ENCODE measurements at regions of chr17 and their contacts with region 1.

Region 1: DNA sequence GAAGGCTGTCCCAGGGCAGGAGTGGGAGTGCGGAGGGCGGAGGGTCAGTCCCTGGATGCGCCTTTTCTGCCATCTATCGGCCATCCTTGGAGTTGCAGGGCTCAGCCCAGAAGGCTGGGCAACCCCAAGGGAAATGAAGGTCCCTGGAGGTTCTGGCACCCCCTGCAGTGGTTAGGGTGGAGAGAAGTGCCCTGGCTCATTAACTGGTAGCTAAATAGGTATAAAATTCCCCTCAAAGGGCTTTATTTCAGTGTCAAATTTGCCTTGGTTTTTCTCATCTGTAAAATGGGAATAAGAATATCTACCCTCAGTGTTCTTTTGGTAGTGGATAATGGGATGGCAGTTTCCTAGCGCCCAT is 22.4 kb downstream of the C17orf75 start:
- DNase-seq: peak; percentile 83
- H3K4me3 ChIP-seq: no peak overlapping the region
- H3K27ac ChIP-seq: no peak overlapping the region
- H3K4me1 ChIP-seq: peaks cover 0 to 9% (median 2%) of the 10 kb centered on the region in 4 donors
- H3K27me3 ChIP-seq: no peaks in the 10 kb centered on the region
- CTCF ChIP-seq: peak; percentile 90 to 96 (median 93)
- EP300 ChIP-seq: no peak
- POLR2A ChIP-seq: no peak

Region 2: GRCh38 chr17:32253117-32253611 is 66.4 kb before region 1 on chr17:
- in situ Hi-C with region 1: loop called in 2 of 4 experiments (anchors 5 kb)
- intact Hi-C with region 1: loop called (anchors 2 kb)
- DNase-seq: peak; percentile 81
- H3K4me3 ChIP-seq: no peak overlapping the region
- H3K27ac ChIP-seq: no peak overlapping the region
- H3K4me1 ChIP-seq: peaks cover 0 to 7% (median 5%) of the 10 kb centered on the region in 4 donors
- H3K27me3 ChIP-seq: no peaks in the 10 kb centered on the region
- CTCF ChIP-seq: peak; percentile 86 to 97 (median 95)
- EP300 ChIP-seq: no peak
- POLR2A ChIP-seq: no peak

Region 3: DNA sequence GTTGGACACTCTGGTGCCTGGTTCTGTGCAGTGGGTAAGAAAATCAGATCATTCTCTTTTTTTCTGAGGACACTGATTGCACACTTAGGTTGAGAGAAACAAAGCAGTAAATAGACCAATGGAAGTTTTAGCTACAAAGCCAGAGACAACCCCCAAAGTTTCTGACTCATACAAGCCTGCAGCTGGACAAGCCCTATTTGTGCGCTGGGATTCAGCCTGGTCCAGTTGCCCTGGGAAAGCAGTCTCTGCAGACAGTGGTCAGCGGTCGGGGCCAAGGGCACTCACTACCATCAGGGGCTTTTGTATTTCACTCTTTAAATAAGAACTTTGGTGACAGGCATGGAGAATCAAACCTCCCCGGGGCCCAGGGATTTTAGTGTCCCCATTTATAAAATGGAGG is 59.9 kb before region 1 on chr17:
- in situ Hi-C with region 1: loop called in 2 of 4 experiments (anchors 5 kb)
- intact Hi-C with region 1: no loop called
- DNase-seq: no peak
- H3K4me3 ChIP-seq: no peak overlapping the region
- H3K27ac ChIP-seq: no peak overlapping the region
- H3K4me1 ChIP-seq: peaks cover 0 to 14% (median 5%) of the 10 kb centered on the region in 4 donors
- H3K27me3 ChIP-seq: peaks cover 24% of the 10 kb centered on the region
- CTCF ChIP-seq: no peak
- EP300 ChIP-seq: no peak
- POLR2A ChIP-seq: no peak

Region 4: GRCh38 chr17:32588982-32589381 is 269.5 kb after region 1 on chr17:
- in situ Hi-C with region 1: no loop called
- intact Hi-C with region 1: no loop called
- DNase-seq: no peak
- H3K4me3 ChIP-seq: no peak overlapping the region
- H3K27ac ChIP-seq: no peak overlapping the region
- H3K4me1 ChIP-seq: no peaks in the 10 kb centered on the region
- H3K27me3 ChIP-seq: no peaks in the 10 kb centered on the region
- CTCF ChIP-seq: no peak
- EP300 ChIP-seq: no peak
- POLR2A ChIP-seq: no peak